Posterior vena cava (tissue), 2 donors: ENCODE measurements at regions of chr15 and their contacts with region 1.

Region 1: GRCh38 chr15:62572797-62573196 is 407.7 kb upstream of the C2CD4B start:
- DNase-seq: no peak

Region 2: DNA sequence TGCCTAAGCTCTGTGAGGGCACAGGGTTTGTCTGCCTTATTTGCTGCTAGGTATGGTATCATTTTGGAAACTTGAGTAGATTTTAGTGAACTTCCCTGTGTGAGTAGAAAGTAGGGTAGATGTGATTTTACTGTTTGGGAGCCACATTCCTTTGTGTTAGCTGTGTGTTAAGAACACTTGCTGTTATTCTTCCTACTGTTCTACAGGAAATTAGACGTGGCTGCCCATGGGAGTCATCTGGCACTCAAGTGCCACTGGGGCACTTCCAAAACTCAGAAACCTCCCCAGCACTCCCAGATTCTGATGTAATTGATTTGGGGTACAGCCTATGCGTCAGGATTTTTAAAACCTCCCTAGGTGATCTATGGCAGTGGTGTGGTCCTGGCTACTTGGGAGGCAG is 37.8 kb before region 1 on chr15:
- intact Hi-C with region 1: loop called in 1 of 2 experiments (anchors 1 kb)
- DNase-seq: no peak

Region 3: DNA sequence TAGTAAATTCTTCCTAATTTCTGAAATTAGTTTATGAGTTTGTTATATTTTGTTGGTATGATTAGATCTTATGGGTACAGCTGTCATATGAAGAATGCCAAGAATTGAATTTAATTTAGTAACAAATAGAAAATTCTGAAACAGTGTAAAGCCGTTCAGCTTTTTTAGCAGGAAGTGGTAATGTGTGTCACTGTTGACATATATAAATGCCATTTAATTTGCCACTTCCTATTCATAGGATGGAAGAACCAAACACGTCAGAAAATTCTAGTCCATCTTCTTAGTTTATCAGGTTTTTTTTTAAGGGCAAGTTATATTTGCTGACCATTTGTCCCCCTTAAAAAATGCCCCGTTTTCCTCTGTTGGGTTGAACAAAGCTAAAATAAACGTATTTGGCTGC is 659.6 kb after region 1 on chr15:
- intact Hi-C with region 1: no loop called
- DNase-seq: no peak